B cell (primary cell): ENCODE measurements at regions of chr5 and their contacts with region 1.

Region 1: DNA sequence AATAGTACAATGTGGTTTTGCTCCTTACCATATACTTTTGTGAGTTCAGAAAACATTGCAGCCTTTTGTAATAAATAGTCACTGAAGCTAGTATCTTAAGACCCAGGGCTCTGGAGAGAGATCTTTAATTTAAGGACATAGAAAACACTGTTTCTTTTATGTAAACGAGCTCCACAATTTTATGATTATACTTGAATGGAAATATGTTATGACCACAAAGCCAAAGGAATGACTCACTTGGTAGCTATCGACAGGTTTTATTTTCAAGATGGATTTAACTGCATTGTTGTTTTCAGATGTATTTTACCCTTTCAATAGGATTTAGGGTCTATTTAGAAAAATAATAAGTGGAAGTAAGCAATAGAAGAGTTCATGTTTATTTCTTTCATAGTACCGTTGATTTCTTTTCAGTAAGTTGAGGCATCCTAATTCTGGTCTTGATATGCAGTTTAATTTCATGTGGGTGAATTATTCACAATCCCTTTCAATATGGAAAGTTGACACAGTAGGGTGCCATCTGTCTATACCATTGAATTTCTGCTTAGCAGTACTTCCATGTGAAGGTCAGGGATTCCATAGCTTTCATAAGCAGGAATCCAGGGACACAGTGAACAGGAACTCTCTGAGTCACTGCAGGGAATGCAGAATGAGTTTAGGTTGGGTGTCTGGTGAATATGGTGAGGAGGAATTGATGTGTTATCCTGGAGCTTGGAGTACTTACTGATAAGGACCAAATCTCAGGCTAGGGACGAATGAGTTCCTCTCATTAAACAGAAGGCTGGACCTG is 157.6 kb downstream of the CD180 start:
- DNase-seq: no peak
- ATAC-seq: no peak
- H3K4me3 ChIP-seq: no peak overlapping the region
- H3K4me3 Mint-ChIP-seq: no peak overlapping the region
- H3K27ac ChIP-seq: no peak overlapping the region
- H3K27ac Mint-ChIP-seq: no peak overlapping the region
- H3K4me1 ChIP-seq: no peaks in the 10 kb centered on the region
- H3K4me1 Mint-ChIP-seq: no peaks in the 10 kb centered on the region
- H3K27me3 ChIP-seq: no peaks in the 10 kb centered on the region
- H3K27me3 Mint-ChIP-seq: peaks cover 3% of the 10 kb centered on the region
- CTCF ChIP-seq: no peak

Region 2: GRCh38 chr5:67003935-67004729 is 34.9 kb before region 1 on chr5:
- CTCF ChIA-PET with region 1: no interaction called
- POLR2A ChIA-PET with region 1: no interaction called
- intact Hi-C with region 1: no loop called
- DNase-seq: peak; percentile 87
- ATAC-seq: peak; percentile 81
- H3K4me3 ChIP-seq: peak overlapping the region; percentile 44 to 91 (median 74)
- H3K4me3 Mint-ChIP-seq: peak overlapping the region; percentile 96
- H3K27ac ChIP-seq: peak overlapping the region in 1 of 2 donors; percentile 67
- H3K27ac Mint-ChIP-seq: peak overlapping the region; percentile 93
- H3K4me1 ChIP-seq: peaks cover 13 to 27% of the 10 kb centered on the region in 2 donors
- H3K4me1 Mint-ChIP-seq: peaks cover 35% of the 10 kb centered on the region
- H3K27me3 ChIP-seq: peaks cover 0 to 6% (median 2%) of the 10 kb centered on the region in 4 experiments
- H3K27me3 Mint-ChIP-seq: no peaks in the 10 kb centered on the region
- CTCF ChIP-seq: no peak

Region 3: GRCh38 chr5:67077296-67077695 is 38.3 kb after region 1 on chr5:
- CTCF ChIA-PET with region 1: no interaction called
- POLR2A ChIA-PET with region 1: no interaction called
- intact Hi-C with region 1: loop called (anchors 5 kb)
- DNase-seq: no peak
- ATAC-seq: no peak
- H3K4me3 ChIP-seq: no peak overlapping the region
- H3K4me3 Mint-ChIP-seq: no peak overlapping the region
- H3K27ac ChIP-seq: no peak overlapping the region
- H3K27ac Mint-ChIP-seq: no peak overlapping the region
- H3K4me1 ChIP-seq: no peaks in the 10 kb centered on the region
- H3K4me1 Mint-ChIP-seq: peaks cover 5% of the 10 kb centered on the region
- H3K27me3 ChIP-seq: no peaks in the 10 kb centered on the region
- H3K27me3 Mint-ChIP-seq: no peaks in the 10 kb centered on the region
- CTCF ChIP-seq: no peak